Dendritic cell treated with granulocyte-macrophage colony-stimulating factor and Interleukin-4, amounts not matched to agents 40 ng/mL and 50 ng/mL, for 4 days (primary cell): ENCODE measurements at regions of chr12 and their contacts with region 1.

Region 1: GRCh38 chr12:81974762-81975161 is 215.6 kb upstream of the PPFIA2 start:
- H3K4me3 Mint-ChIP-seq: no peak overlapping the region
- H3K27ac Mint-ChIP-seq: no peak overlapping the region
- H3K4me1 Mint-ChIP-seq: no peaks in the 10 kb centered on the region
- H3K27me3 Mint-ChIP-seq: peaks cover 15% of the 10 kb centered on the region

Region 2: DNA sequence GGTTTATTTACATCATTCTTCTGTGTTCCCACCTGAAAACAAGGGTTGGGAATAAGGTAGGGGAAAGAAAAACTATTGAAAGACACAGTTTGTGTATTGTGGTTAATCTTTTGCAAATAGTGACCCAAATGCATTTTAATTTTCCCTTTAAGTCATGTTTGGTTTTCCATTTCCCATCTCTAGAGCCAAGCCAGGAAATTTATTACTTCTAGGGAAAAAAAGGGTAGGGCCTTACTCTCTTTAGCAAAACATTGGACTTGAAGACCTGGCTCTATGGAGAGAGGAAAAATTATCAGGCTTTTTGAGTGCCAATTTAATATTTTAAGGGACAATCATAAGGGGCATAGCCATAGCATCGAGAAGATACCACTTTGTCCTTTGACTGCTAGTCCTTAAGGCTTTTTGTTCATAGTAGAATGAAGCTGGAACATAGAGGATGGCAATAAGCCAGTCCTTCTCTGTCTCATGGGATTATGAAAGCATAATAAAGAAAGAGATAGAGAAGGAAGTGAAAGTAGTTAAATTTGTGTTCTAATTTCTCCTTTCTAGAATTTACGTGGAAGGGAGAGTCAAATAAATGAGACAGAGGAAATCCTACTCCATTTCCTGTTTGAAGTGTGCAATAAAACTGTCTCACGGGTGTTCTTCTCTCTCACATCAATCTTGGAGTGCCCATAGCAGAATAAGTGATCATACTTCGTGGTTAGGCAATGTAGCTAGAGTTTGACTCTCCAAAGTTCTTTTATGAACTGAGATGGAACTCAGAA is 164.8 kb before region 1 on chr12:
- intact Hi-C with region 1: loop called (anchors 10 kb)
- H3K4me3 Mint-ChIP-seq: no peak overlapping the region
- H3K27ac Mint-ChIP-seq: no peak overlapping the region
- H3K4me1 Mint-ChIP-seq: peaks cover 10% of the 10 kb centered on the region
- H3K27me3 Mint-ChIP-seq: peaks cover 66% of the 10 kb centered on the region